ENCODE measurements at regions of chr15 and their contacts with region 1.

Region 1: DNA sequence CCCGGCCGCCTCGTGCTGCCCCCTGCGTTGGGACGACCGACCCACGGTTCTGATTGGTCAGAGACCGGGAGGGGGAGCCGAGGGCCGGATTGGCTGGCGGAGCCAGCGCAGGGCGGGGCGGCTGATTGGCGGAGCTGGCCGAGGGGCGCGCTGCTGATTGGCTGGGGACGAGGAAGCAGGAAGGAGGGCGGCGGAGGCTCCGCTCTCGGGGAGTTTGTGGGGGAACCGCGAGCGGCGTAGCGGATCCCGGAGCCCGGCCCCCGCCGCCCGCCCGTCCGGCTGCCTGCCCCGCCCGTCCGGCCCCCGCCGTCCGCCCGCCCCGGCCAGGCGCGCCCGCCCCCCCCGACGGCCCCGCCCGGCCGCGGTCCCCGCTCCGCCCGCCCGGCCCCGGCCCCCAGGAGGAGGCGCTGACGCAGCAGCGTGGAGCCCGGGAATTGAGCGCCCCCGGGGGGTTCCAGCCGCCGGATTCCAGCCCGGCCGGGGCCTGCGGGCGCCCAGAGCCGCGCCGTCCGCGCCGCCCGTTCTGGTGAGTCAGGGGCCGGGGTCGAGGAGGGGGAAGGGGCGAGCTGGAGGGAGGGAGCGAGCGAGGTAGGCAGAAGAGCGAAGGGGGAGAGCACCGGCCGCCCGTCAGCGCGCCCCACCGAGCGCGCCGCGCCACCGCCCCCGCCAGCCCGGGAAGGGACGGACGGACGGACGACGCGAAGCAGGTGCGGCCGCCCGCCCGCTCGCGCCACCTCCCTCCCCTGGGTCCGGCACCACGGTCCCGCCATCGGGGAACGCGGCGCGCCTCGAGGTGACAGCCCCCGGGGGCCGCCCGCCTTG is at the start of gene BAHD1:
- DNase-seq: peak; percentile 100
- CTCF ChIP-seq: peak; percentile 18

Region 2: GRCh38 chr15:39728845-39729244 is 712.1 kb before region 1 on chr15:
- CTCF ChIA-PET with region 1: no interaction called
- POLR2A ChIA-PET with region 1: no interaction called
- DNase-seq: no peak
- CTCF ChIP-seq: no peak

Region 3: DNA sequence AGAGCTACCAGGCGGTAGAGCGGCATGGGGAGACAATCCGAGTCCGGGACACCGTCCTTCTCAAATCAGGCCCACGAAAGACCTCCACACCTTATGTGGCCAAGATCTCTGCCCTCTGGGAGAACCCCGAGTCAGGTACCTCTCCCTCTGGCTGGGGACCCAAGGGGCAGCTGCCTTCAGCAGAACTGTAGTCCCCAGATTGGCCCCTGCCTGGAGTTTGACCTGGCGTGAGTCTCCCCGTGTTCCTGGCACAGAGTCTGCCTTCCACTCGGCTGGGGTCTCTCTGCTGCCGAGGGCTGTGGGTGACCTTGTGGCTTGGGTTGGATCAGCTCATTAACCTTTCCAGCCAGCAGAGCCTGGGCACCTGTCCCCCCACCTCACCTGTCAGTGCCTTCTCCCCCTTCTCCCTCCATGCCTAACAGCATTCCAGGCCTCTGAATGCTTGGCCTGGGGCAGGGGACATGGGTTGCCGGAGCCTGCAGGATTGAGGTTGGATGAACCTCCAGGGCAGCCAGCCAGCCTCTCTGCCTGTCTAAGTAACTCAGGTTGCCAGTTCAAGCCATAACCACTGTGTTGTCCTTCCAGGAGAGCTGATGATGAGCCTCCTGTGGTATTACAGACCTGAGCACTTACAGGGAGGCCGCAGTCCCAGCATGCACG is 23.1 kb after region 1 on chr15:
- CTCF ChIA-PET with region 1: interaction called, 13 read pairs
- POLR2A ChIA-PET with region 1: no interaction called
- DNase-seq: no peak
- CTCF ChIP-seq: no peak